GM10248 (cell line): ENCODE measurements at regions of chr19 and their contacts with region 1.

Region 1: GRCh38 chr19:41641879-41642485 is 15.1 kb upstream of the CEACAM4 start:
- DNase-seq: peak; percentile 79
- CTCF ChIP-seq: peak; percentile 86

Region 2: DNA sequence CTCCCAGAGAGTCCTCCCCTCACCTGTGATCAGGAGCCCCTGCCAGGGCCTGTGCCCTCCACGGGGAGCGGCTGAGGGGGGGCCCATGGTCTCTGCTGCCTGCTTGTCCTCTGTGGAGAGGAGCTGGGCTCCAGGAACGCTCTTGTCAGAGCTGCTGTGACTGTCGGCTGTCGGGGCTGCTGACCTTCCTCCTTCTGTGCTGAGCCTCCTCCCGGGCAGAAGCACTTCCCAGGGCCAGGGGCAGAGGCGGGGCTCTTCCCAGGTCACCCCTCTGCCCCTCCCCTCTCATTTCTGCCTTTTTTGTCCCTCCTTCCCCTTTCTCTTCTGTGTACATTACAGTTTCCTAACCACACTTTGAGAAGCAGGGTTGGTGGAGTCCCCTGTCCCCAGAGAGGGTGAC is 15.1 kb before region 1 on chr19 and contains the start of gene CEACAM4:
- CTCF ChIA-PET with region 1: interaction called, 14 read pairs
- POLR2A ChIA-PET with region 1: no interaction called
- DNase-seq: no peak
- CTCF ChIP-seq: no peak

Region 3: DNA sequence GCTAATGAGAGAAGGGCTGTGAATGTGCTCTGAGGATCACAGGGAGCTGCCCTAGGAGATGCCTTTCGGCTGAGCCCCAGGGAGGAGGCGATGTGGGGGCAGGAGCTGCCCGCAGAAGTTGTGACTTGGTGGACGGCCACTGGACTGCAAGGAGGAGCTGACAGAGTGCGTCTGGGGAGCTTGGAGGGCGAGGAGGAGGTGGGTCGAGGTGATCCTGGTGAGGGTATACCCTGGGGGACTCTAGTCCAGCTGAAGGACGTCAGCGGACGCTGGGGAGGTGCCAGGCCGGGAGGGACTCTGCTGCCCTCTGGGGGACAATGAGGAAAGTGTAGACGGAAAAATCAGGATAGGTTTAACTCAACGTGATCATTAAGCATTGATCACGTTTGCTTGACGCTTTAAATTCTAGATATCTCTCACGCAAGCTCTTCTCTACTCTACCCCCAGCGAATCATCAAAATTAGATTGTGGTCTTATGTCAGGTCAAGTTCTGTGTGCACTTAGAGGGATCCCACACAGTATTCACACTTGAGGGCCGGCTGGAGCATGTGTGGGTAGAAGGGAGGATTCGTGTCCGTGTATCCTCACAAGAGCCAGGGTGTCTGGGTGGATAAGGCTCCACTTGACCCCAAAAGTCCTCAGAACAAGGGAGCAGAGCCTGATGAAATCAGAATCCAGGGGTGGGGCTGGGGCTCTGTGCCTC is 49.4 kb after region 1 on chr19:
- CTCF ChIA-PET with region 1: interaction called, 25 read pairs
- POLR2A ChIA-PET with region 1: no interaction called
- DNase-seq: peak; percentile 56
- CTCF ChIP-seq: peak; percentile 42

Region 4: DNA sequence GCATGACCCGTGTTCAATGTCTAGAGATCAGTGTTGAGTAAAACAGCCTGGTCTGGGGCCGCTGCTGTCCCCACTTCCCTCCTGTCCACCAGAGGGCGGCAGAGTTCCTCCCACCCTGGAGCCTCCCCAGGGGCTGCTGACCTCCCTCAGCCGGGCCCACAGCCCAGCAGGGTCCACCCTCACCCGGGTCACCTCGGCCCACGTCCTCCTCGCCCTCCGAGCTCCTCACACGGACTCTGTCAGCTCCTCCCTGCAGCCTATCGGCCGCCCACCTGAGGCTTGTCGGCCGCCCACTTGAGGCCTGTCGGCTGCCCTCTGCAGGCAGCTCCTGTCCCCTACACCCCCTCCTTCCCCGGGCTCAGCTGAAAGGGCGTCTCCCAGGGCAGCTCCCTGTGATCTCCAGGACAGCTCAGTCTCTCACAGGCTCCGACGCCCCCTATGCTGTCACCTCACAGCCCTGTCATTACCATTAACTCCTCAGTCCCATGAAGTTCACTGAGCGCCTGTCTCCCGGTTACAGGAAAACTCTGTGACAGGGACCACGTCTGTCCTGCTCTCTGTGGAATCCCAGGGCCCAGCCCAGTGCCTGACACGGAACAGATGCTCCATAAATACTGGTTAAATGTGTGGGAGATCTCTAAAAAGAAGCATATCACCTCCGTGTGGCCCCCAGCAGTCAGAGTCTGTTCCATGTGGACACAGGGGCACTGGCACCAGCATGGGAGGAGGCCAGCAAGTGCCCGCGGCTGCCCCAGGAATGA is 64.9 kb after region 1 on chr19:
- CTCF ChIA-PET with region 1: interaction called, 17 read pairs
- POLR2A ChIA-PET with region 1: no interaction called
- DNase-seq: peak; percentile 86
- CTCF ChIP-seq: peak; percentile 72

Region 5: GRCh38 chr19:41746593-41747227 is 104.7 kb after region 1 on chr19:
- CTCF ChIA-PET with region 1: interaction called, 11 read pairs
- POLR2A ChIA-PET with region 1: no interaction called
- DNase-seq: peak; percentile 51
- CTCF ChIP-seq: peak; percentile 69